ENCODE measurements at regions of chr15 and their contacts with region 1.

Region 1: DNA sequence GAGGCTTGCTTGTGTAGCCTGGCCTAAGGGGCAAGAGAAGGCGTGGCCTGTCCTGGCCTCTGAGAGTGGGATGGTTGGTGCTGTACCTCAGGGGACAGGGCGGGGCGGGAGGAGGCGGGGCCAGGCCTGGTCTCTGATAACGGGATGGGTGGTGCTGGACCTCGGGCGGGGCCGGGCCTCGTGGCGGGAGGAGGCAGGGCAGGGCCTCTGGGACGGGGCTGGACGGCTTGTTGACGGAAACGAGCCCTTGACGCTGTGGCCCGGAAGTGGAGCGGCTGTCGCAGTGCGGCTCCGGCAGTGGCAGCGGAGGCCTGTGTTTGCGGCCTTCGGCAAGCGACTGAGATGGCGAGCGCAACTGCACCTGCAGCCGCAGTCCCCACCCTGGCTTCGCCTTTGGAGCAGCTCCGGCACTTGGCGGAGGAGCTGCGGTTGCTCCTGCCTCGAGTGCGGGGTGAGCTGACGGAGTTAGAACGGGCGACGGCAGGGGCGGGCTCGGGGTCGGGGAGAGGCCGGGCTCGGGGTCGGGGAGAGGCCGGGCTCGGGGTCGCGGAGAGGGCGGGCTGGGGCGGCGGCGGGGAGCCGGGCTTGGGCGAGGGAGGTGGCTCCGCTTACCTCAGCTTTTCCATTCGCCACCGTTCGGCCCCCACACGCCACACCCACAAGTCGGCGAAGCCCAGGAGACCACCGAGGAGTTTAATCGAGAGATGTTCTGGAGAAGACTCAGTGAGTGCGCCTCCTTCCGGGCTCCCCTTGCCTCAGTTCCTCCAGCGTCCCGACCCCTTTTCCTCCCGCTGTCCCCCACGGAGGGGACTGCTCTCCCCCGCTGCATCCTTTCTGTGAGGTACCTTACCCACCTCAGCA is at the start of gene CCNDBP1:
- DNase-seq: peak; percentile 96 to 98
- ATAC-seq: peak; percentile 94
- H3K4me3 ChIP-seq: peak within 1 kb of the TSS; percentile 65 to 81
- H3K27ac ChIP-seq: peak within 1 kb of the TSS in 1 of 2 donors; percentile 70
- H3K4me1 ChIP-seq: no peaks in the 10 kb centered on the region
- H3K27me3 ChIP-seq: no peaks in the 10 kb centered on the region
- total RNA-seq, gene CCNDBP1: 60.7 to 68.7 TPM

Region 2: DNA sequence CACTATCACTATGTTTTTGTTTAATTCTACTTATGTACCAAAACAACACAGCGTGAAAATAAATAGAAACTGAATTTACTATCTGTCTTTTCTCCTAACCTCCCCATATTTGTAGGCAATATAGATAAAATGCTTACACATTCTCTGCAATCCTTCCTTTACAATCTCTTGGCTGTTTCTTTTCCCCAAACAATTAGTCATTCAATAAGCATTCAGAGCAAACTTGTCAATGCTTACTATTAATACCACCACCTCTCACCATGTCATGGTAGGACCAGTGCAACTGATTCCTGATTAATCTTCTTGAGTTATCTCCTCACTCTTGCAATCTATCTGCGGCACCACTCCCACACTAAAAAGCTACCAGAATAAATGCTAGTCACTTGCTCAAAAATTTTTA is 190.8 kb before region 1 on chr15:
- intact Hi-C with region 1: no loop called
- DNase-seq: no peak
- ATAC-seq: no peak
- H3K4me3 ChIP-seq: no peak overlapping the region
- H3K27ac ChIP-seq: no peak overlapping the region
- H3K4me1 ChIP-seq: no peaks in the 10 kb centered on the region
- H3K27me3 ChIP-seq: no peaks in the 10 kb centered on the region

Region 3: DNA sequence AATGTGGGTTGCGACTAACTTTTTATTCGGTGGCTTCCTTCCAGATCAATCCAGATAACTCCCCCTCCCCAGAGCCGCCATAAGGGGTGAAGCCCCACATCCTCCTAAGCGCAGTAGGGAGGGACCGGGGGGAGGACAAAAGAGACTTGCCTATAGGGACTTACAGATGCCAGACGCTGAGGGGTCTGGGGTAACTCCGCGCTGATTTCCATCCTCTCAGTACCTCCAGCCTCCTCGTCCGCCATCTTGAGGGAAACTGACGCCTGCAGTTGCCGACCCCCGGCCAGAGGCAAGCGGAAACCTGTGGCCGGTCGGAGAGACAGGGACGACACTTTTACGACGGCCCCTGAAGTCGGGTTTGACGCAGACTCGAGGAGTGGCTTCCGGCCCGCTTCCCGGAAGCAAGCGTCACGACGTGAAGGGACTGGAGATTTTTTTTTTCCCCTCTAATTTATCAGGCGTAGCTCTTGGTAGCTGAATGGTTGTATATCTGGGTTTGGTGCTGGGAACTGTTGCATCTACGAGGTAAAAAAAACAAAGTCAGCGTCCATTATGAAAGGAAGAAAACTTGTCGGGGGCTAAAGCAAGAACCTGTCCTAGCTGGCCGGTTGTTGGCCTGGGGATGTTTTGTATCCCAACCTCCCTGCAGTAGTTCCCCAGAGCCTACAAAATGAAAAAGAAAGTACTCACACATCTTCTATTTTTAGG is 79.5 kb before region 1 on chr15 and contains the start of gene UBR1:
- intact Hi-C with region 1: loop called in 1 of 2 experiments (anchors 5 kb)
- DNase-seq: peak; percentile 95 to 96
- ATAC-seq: peak; percentile 97
- H3K4me3 ChIP-seq: peak within 1 kb of the TSS; percentile 74 to 97
- H3K27ac ChIP-seq: peak within 1 kb of the TSS; percentile 51 to 78
- H3K4me1 ChIP-seq: peaks cover 0 to 4% of the 10 kb centered on the region in 2 donors
- H3K27me3 ChIP-seq: no peaks in the 10 kb centered on the region
- total RNA-seq, gene UBR1: 40.6 to 43.7 TPM